GM10248 (cell line): ENCODE measurements at regions of chr4 and their contacts with region 1.

Region 1: DNA sequence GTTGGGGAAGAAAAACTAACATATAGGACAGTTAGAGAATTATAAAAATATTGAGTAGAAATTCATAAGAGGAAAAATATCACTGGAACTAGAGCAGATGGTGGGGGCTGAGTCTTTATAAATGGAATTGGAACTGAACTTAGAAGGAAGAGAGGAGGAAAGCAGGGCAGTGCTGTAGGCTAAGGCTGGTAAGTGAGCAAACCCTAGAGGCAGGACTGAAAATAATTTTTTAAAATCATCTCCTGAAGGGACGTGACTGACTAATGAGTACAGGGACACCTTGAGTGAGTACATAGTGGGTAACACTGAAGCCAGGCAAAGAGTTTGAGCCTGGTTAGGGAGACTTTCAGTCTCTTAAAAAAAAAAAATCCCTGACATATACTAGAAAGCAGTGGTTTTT is 63.3 kb downstream of the GALNT7 start:
- DNase-seq: no peak
- CTCF ChIP-seq: no peak

Region 2: GRCh38 chr4:173218411-173219125 is 13.3 kb before region 1 on chr4:
- CTCF ChIA-PET with region 1: interaction called, 11 read pairs
- POLR2A ChIA-PET with region 1: no interaction called
- DNase-seq: no peak
- CTCF ChIP-seq: no peak

Region 3: GRCh38 chr4:173420324-173420752 is 188.4 kb after region 1 on chr4:
- CTCF ChIA-PET with region 1: no interaction called
- POLR2A ChIA-PET with region 1: no interaction called
- DNase-seq: peak; percentile 24
- CTCF ChIP-seq: peak; percentile 40